ENCODE measurements at regions of chr2 and their contacts with region 1.

Region 1: GRCh38 chr2:48107326-48107925 is 201.1 kb upstream of the FBXO11 start:
- DNase-seq: no peak
- ATAC-seq: no peak
- H3K4me3 ChIP-seq: no peak overlapping the region
- H3K4me1 ChIP-seq: peaks cover 7% of the 10 kb centered on the region
- CTCF ChIP-seq: no peak

Region 2: GRCh38 chr2:47850198-47850597 is 257.2 kb before region 1 on chr2:
- intact Hi-C with region 1: loop called (anchors 5 to 10 kb)
- DNase-seq: no peak
- ATAC-seq: no peak
- H3K4me3 ChIP-seq: no peak overlapping the region
- H3K4me1 ChIP-seq: no peaks in the 10 kb centered on the region
- CTCF ChIP-seq: no peak

Region 3: DNA sequence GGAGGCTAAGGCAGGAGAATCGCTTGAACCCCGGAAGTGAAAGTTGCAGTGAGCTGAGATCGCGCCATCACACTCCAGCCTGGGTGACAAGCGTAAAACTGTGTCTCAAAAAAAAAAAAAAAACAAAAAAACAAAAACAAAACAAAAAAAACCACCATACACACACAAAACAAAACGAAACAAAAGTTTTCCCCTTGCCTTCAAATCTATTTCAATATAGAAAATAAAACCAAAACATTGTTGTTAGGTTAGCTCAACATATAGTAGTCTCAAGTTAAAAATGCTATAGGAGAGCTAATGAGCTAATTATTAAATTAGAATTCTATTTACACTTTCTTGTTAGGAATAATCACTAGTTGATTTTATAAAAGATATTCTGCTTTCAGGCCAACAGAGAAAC is 244.5 kb before region 1 on chr2:
- intact Hi-C with region 1: loop called (anchors 5 to 10 kb)
- DNase-seq: no peak
- ATAC-seq: no peak
- H3K4me3 ChIP-seq: no peak overlapping the region
- H3K4me1 ChIP-seq: peaks cover 9% of the 10 kb centered on the region
- CTCF ChIP-seq: no peak

Region 4: GRCh38 chr2:47906157-47907038 is 201.0 kb before region 1 on chr2 and contains the start of gene FBXO11:
- intact Hi-C with region 1: loop called in 1 of 2 experiments (anchors 5 kb)
- DNase-seq: peak; percentile 93 to 96 (median 94)
- ATAC-seq: peak; percentile 89
- H3K4me3 ChIP-seq: peak within 1 kb of the TSS; percentile 93
- H3K4me1 ChIP-seq: peaks cover 8% of the 10 kb centered on the region
- CTCF ChIP-seq: no peak
- total RNA-seq, gene FBXO11: 40.7 to 70.4 (median 46.7) TPM

Measured in mucosa of descending colon (tissue), 3 donors.